Prostate gland (tissue), 2 donors: ENCODE measurements at regions of chr15 and their contacts with region 1.

Region 1: DNA sequence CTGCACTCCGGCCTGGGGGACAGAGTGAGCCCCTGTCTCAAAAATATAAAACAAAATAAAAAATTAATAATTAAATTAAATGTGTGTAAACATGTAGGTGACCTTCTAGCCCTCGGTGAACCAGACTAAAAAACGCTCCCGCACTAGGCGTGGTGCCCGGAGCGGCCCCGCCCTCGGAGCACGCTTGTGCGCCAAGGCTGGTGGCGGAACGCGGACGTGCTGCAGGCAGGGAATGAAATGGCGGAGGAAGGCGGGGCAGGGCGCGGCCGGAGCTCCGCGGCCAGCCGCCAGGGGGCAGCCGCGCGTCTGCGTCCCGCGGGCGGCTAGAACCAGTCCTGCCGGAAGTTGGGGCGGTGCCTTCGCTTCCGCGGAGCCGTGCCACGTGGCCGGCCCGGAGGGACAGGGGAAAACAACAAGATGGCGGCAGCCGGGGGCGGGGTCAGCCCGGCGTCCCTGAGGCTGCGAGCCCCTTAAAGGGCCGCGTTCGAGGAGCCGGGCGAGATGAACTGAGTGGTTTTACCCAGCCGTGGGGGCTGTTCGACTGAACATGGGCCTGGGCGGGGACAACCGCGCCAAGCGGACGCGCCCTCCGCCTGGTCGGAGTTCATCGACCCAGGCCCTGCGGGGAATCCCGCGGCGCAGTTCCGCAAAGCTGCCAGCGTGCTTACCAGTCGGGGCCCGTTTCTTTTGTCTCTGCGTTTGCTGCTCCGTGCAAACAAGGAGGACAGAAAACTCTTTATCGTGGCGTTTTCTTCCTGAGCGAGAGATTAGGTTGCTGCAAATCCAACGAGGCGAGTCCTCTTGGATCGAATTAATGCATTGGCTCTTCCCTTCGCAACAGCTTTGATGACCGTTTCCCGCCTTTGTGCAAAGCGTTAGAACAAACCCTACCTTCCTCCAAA is 90.9 kb upstream of the CHD2 start:
- DNase-seq: peak; percentile 93
- H3K4me3 ChIP-seq: peak overlapping the region; percentile 34 to 48
- H3K27ac ChIP-seq: peak overlapping the region; percentile 98 to 99
- H3K4me1 ChIP-seq: no peaks in the 10 kb centered on the region
- H3K27me3 ChIP-seq: no peaks in the 10 kb centered on the region
- CTCF ChIP-seq: peak; percentile 98 to 100 (median 100)
- POLR2A ChIP-seq: peak; percentile 68

Region 2: DNA sequence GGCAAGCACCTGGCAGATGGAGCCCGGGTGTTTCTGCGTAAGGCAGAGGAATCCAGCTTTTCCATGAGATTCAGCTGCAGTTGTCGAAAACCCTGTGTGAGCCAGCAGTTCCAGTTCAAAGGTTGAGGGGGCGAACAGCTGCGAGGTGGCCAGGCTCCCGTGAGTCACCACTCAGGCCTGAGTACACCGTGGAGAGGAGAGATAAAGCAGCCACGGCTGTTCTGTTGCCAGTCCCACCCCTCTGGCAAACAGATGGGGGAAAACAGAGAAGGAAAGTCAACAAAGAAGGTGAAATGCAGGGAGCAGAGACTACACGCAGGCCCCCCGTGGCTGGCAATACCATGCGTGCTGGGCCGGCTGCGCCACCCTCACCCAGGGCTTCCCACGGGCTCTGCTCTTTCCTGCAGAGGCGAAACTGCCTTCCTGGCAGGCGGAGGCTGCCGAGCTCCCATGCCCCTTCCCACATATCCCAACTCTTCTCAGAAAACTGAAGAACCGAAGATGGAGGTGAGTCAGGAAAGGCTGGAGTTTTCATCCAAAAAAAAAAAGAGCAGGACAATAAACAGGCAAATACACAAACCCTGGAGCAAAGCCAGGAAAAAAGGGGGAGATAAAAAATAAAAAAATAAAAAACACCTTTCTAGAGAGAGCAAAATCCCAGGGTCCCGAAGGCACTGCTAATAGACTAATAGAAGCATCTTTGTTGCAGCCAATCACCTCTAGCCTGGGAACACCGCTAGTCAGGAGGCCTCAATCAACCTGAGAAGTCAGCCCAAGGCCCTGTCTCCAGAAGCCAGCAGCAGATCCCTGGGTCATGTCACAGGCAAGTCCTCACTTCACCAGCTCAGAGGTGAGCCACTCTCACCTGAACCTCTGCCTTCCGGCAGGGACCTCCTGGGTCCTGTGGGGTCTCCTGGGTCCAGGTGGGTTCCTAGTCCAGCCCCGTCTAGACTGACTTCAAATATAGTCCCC is 191.4 kb before region 1 on chr15:
- intact Hi-C with region 1: loop called (anchors 10 kb)
- DNase-seq: peak; percentile 73
- H3K4me3 ChIP-seq: no peak overlapping the region
- H3K27ac ChIP-seq: peak overlapping the region; percentile 74 to 80
- H3K4me1 ChIP-seq: peaks cover 40% of the 10 kb centered on the region
- H3K27me3 ChIP-seq: no peaks in the 10 kb centered on the region
- CTCF ChIP-seq: peak in 1 of 4 experiments; percentile 13
- POLR2A ChIP-seq: no peak

Region 3: GRCh38 chr15:92831655-92832328 is 22.6 kb after region 1 on chr15:
- intact Hi-C with region 1: loop called (anchors 2 kb)
- DNase-seq: peak; percentile 95
- H3K4me3 ChIP-seq: peak overlapping the region; percentile 16 to 33
- H3K27ac ChIP-seq: peak overlapping the region; percentile 89 to 91
- H3K4me1 ChIP-seq: peaks cover 19% of the 10 kb centered on the region
- H3K27me3 ChIP-seq: no peaks in the 10 kb centered on the region
- CTCF ChIP-seq: peak in 2 of 4 experiments; percentile 1 to 5
- POLR2A ChIP-seq: peak; percentile 79

Region 4: GRCh38 chr15:92881802-92882696 is 72.8 kb after region 1 on chr15:
- intact Hi-C with region 1: loop called (anchors 1 kb)
- DNase-seq: peak; percentile 99
- H3K4me3 ChIP-seq: peak overlapping the region; percentile 27 to 97
- H3K27ac ChIP-seq: peak overlapping the region; percentile 100
- H3K4me1 ChIP-seq: no peaks in the 10 kb centered on the region
- H3K27me3 ChIP-seq: no peaks in the 10 kb centered on the region
- CTCF ChIP-seq: peak in 2 of 4 experiments; percentile 13 to 22
- POLR2A ChIP-seq: peak; percentile 96

Region 5: DNA sequence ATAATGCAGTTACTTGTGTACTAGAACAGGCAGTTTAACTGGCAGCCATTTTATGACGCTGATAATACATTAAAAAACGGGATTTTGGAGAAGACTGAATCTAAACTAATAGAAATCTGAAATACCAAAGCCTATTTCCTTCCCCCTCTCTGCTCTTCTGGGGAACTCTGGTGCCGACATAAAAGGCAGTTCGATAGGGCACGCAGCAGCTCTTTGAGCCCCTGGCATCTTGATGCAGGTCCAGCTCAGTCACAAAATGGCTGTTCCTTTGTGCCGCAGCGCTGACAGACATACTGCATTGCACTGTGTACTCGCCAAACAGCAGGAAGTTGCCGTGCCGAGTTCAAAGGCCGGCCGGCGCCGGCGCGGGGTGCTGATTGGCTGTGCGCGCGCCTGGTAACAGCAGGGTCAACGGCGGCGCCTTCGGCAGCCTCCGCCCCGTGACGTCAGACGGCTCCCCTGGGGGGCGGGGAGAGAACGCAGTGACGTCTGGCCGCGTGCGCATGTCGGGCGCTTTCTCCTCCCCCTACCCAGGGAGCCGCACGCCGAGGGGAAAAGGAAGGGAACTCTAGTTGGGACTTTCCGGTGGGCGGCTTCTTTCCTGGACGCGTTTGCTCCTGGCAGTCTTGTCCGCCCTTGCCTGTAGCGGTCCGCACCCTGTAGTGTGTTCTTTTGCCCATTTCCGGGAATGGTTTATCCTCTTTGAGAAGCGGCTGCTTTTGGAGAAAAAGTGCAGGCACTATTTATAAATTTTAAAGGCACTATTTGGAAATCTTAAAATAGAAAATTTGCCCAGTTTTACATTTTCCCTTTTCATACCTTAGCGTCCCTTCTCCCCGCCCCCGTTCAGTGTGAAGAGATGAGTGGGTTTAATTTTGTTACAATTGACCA is 95.0 kb after region 1 on chr15:
- intact Hi-C with region 1: loop called (anchors 5 kb)
- DNase-seq: peak; percentile 98
- H3K4me3 ChIP-seq: peak overlapping the region; percentile 55 to 63
- H3K27ac ChIP-seq: peak overlapping the region; percentile 98
- H3K4me1 ChIP-seq: peaks cover 7% of the 10 kb centered on the region
- H3K27me3 ChIP-seq: no peaks in the 10 kb centered on the region
- CTCF ChIP-seq: peak in 2 of 4 experiments; percentile 26 to 36
- POLR2A ChIP-seq: peak; percentile 93

Region 6: GRCh38 chr15:92917606-92918407 is 108.6 kb after region 1 on chr15:
- intact Hi-C with region 1: loop called (anchors 1 kb)
- DNase-seq: peak; percentile 98
- H3K4me3 ChIP-seq: no peak overlapping the region
- H3K27ac ChIP-seq: peak overlapping the region; percentile 88 to 91
- H3K4me1 ChIP-seq: peaks cover 29% of the 10 kb centered on the region
- H3K27me3 ChIP-seq: no peaks in the 10 kb centered on the region
- CTCF ChIP-seq: peak; percentile 94 to 100 (median 98)
- POLR2A ChIP-seq: no peak

Region 7: DNA sequence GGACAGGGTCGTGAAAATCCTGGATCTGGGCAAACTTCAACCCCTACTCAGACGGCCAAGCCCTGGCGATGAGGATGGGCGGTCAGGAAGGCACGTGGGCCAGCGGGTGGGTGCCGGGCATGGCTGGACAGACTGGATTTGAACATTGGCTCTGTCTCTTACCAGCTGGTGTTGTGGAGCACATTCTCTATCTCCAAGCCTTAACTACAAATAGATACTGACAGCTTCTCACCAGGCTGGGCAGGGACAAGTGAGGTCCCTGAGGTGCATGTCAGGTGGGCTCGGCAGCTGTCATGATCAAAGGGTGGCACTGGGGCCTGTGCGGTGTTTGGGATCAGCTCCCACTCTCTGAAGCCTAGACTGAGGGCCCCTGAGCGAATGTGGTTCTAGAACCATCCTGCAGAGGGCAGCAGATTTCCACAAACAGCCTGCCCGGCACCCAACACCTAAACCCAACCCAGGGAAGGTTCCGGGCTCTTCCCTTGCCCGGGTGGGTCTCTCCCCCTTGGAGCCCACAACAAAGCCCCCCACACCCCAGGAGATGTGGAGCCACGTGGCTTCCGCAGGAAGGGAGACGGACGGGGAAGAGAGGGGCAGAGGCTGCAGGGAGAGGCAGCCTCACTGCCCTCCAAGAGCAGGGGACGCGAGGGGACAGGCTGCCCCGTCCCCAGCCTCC is 221.3 kb after region 1 on chr15:
- intact Hi-C with region 1: loop called (anchors 5 kb)
- DNase-seq: peak; percentile 77
- H3K4me3 ChIP-seq: no peak overlapping the region
- H3K27ac ChIP-seq: peak overlapping the region; percentile 8 to 59
- H3K4me1 ChIP-seq: peaks cover 31% of the 10 kb centered on the region
- H3K27me3 ChIP-seq: no peaks in the 10 kb centered on the region
- CTCF ChIP-seq: peak; percentile 72 to 89 (median 86)
- POLR2A ChIP-seq: no peak